Body of pancreas (tissue), 4 donors: ENCODE measurements at regions of chr22 and their contacts with region 1.

Region 1: GRCh38 chr22:29259253-29259899 is 8.4 kb downstream of the RHBDD3 start:
- DNase-seq: no peak
- ATAC-seq: no peak
- H3K4me3 ChIP-seq: no peak overlapping the region
- H3K27ac ChIP-seq: no peak overlapping the region
- H3K4me1 ChIP-seq: peaks cover 10% of the 10 kb centered on the region
- H3K27me3 ChIP-seq: no peaks in the 10 kb centered on the region
- CTCF ChIP-seq: no peak
- POLR2A ChIP-seq: no peak

Region 2: DNA sequence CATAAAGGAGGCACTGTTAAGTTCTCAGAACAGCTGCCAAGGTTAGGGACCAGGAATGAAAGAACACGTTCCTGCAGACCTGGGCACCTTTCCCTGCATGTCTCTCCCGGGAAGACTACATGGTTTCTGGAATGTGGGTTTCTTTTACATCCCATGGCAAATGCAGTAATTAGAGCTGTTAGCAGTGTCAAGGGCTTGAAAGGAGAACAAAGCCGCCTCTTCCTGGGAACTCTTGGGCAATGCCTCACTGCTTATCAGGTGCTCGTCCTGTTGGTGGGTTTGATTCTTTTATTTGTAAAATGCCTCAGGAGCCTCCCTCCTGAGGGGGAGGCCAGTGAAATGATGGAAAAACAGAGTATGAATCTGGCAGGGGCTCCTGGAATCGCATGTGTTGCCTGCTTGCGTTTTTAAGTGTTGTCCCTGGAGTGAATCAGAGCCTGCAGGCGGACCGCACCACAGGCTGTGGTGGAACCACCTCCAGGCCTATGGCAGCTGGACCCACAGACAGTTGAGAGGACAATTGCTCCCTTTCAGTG is 197.0 kb before region 1 on chr22:
- intact Hi-C with region 1: loop called (anchors 10 kb)
- DNase-seq: no peak
- ATAC-seq: peak; percentile 18
- H3K4me3 ChIP-seq: no peak overlapping the region
- H3K27ac ChIP-seq: no peak overlapping the region
- H3K4me1 ChIP-seq: no peaks in the 10 kb centered on the region
- H3K27me3 ChIP-seq: no peaks in the 10 kb centered on the region
- CTCF ChIP-seq: no peak
- POLR2A ChIP-seq: no peak